K562 (cell line): ENCODE measurements at regions of chr11 and their contacts with region 1.

Region 1: GRCh38 chr11:59135648-59136461 is 6.8 kb upstream of the FAM111A start:
- DNase-seq: peak; percentile 80 to 83 (median 81)
- ATAC-seq: peak; percentile 100
- H3K4me3 ChIP-seq: peak overlapping the region; percentile 9; the same call in 1 of the 2 replicates
- H3K27ac ChIP-seq: no peak overlapping the region
- H3K4me1 ChIP-seq: peaks cover 2 to 3% of the 10 kb centered on the region in 2 experiments; a peak in 2 of 5 replicates
- H3K27me3 ChIP-seq: no peaks in the 10 kb centered on the region
- CTCF ChIP-seq: peak; percentile 93 to 97 (median 93)
- EP300 ChIP-seq: no peak
- POLR2A ChIP-seq: no peak
- RAD21 ChIP-seq: peak; percentile 83 to 88

Region 2: DNA sequence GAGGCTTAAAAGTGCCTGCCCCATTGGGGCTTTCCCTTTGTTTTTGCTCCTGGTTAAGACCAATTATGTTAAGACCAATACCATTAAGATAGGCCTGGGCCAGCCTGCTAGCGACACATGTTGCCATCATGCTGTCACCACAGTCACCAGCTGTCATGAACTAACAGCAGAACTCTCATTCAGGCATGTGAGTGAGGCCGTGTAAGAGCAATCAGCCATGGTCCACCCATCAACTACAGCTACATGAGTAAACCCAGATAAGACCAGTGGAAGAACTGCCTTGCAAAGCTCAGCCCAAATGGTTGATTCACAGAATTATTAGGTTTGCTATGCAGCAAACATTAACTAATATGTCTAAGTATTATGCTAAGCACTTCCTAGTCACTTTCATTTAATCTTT is 424.0 kb before region 1 on chr11:
- CTCF ChIA-PET with region 1: no interaction called
- POLR2A ChIA-PET with region 1: no interaction called
- in situ Hi-C with region 1: no loop called
- intact Hi-C with region 1: no loop called
- DNase-seq: peak in 2 of 4 experiments; percentile 10 to 51
- ATAC-seq: peak; percentile 54; the same call in 1 of the 3 replicates
- H3K4me3 ChIP-seq: no peak overlapping the region
- H3K27ac ChIP-seq: no peak overlapping the region
- H3K4me1 ChIP-seq: no peaks in the 10 kb centered on the region
- H3K27me3 ChIP-seq: no peaks in the 10 kb centered on the region
- CTCF ChIP-seq: no peak
- EP300 ChIP-seq: no peak
- POLR2A ChIP-seq: no peak
- RAD21 ChIP-seq: no peak

Region 3: DNA sequence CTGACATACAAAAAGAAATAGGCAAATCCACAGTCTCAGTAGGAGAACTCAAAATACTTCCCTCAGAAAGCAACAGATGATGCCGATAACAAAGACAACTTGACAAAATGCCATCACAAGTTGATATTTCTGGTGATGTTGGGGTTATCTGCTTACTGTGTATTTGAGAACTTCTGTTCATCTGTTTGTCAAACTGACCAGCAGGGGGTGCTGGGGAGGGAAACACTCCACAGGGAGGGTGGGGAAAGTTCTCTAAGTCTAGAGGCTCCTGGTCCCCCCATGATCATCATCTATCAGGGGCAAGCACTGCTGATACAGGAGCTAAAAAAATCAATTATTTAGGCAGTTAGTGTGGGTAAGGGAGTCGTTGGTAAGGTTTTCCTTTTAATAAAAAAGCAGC is 177.4 kb before region 1 on chr11:
- CTCF ChIA-PET with region 1: interaction called, 5 read pairs
- POLR2A ChIA-PET with region 1: no interaction called
- in situ Hi-C with region 1: no loop called
- intact Hi-C with region 1: loop called (anchors 2 kb)
- DNase-seq: peak; percentile 55 to 67 (median 58)
- ATAC-seq: peak; percentile 87
- H3K4me3 ChIP-seq: no peak overlapping the region
- H3K27ac ChIP-seq: no peak overlapping the region
- H3K4me1 ChIP-seq: no peaks in the 10 kb centered on the region
- H3K27me3 ChIP-seq: peaks cover 0 to 5% of the 10 kb centered on the region in 2 experiments; a peak in 1 of 5 replicates
- CTCF ChIP-seq: peak; percentile 46 to 54 (median 50); a peak in 5 of 6 replicates
- EP300 ChIP-seq: no peak
- POLR2A ChIP-seq: no peak
- RAD21 ChIP-seq: peak; percentile 26; a peak in 2 of 4 replicates

Region 4: GRCh38 chr11:59011655-59012397 is 124.0 kb before region 1 on chr11:
- CTCF ChIA-PET with region 1: no interaction called
- POLR2A ChIA-PET with region 1: no interaction called
- in situ Hi-C with region 1: no loop called
- intact Hi-C with region 1: no loop called
- DNase-seq: no peak
- ATAC-seq: no peak
- H3K4me3 ChIP-seq: no peak overlapping the region
- H3K27ac ChIP-seq: no peak overlapping the region
- H3K4me1 ChIP-seq: no peaks in the 10 kb centered on the region
- H3K27me3 ChIP-seq: no peaks in the 10 kb centered on the region
- CTCF ChIP-seq: no peak
- EP300 ChIP-seq: no peak
- POLR2A ChIP-seq: no peak
- RAD21 ChIP-seq: no peak

Region 5: GRCh38 chr11:59097113-59097708 is 38.6 kb before region 1 on chr11:
- CTCF ChIA-PET with region 1: interaction called, 3 read pairs
- POLR2A ChIA-PET with region 1: no interaction called
- in situ Hi-C with region 1: no loop called
- intact Hi-C with region 1: loop called (anchors 1 kb)
- DNase-seq: peak; percentile 15 to 66 (median 18)
- ATAC-seq: peak; percentile 88
- H3K4me3 ChIP-seq: no peak overlapping the region
- H3K27ac ChIP-seq: no peak overlapping the region
- H3K4me1 ChIP-seq: peaks cover 0 to 2% of the 10 kb centered on the region in 2 experiments; a peak in 1 of 5 replicates
- H3K27me3 ChIP-seq: no peaks in the 10 kb centered on the region; a peak in 1 of 5 replicates
- CTCF ChIP-seq: peak; percentile 56 to 63 (median 59); a peak in 5 of 6 replicates
- EP300 ChIP-seq: no peak
- POLR2A ChIP-seq: no peak
- RAD21 ChIP-seq: peak; percentile 41 to 52